Breast epithelium (tissue), 4 donors: ENCODE measurements at regions of chr17 and their contacts with region 1.

Region 1: DNA sequence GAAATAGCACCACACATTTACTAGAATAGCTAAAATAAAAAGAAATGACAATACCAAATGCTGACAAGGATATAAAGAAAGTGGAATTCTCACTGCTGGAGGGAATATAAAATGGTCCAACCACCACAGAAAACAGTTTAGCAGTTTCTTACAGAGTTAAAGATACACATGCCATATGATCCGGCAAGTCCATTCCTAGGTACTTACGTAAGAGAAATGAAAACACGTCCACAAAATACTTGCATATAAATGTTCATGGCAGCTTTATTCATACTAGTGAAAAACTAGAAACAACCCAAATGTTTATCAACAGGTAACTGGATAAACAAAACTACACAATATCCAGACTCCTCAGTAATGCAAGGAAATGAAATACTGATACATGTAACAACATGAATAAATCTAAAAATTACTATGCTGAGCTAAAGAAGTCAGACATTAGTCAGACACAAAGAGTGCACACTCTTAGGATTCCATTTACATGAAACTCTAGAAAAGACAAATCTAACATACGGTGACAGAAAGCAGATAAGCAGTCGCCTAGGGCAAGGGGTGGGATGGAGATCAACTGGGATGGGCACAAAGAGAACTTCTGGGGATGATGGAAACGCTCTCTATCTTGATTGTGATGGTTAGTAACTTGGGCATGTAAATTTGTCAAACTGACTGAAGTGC is 76.4 kb downstream of the SMG6 start:
- DNase-seq: no peak
- H3K4me3 ChIP-seq: no peak overlapping the region
- H3K27ac ChIP-seq: no peak overlapping the region
- H3K4me1 ChIP-seq: peaks cover 7% of the 10 kb centered on the region in 2 donors
- H3K27me3 ChIP-seq: no peaks in the 10 kb centered on the region
- CTCF ChIP-seq: no peak
- POLR2A ChIP-seq: no peak

Region 2: DNA sequence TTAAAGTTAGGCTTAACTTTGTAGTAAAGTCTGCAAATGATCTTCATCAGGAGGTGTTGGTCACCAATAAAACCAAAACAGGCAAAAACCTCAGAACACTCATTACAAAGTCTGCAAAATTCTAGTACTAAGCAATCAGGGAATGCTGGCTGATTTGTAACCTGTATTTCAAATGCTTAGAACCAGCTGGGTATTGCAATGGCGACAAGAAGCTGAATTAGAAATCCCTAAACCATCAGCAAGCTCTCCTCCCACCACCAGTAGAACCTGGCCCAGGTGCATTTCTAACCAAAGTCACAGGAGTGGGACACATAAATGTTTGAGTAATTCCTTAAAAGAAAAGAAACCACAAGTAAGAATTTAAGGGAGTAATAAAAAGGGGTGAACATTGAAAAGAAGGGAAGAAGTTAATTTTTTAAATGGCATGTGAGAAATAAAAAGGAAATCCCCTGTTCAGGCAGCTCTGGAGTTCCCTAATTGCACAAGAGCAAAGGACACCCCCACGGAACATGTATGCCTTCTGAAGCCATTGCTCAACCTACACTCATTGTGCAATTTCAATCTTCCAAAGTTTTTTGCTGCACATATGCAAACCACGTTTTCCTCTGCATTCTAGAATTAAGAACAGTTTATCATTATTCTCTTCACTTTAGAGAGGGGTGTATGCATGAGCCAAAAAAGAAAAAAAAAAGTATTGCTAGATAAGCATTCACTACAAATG is 69.3 kb before region 1 on chr17:
- intact Hi-C with region 1: loop called (anchors 2 kb)
- DNase-seq: no peak
- H3K4me3 ChIP-seq: no peak overlapping the region
- H3K27ac ChIP-seq: peak overlapping the region in 1 of 2 donors; percentile 57
- H3K4me1 ChIP-seq: no peaks in the 10 kb centered on the region
- H3K27me3 ChIP-seq: no peaks in the 10 kb centered on the region
- CTCF ChIP-seq: no peak
- POLR2A ChIP-seq: no peak